ENCODE measurements at regions of chr19 and their contacts with region 1.

Region 1: GRCh38 chr19:3365836-3366752 is at the start of gene NFIC:
- DNase-seq: peak in 1 of 2 donors; percentile 90
- H3K4me3 ChIP-seq: peak within 1 kb of the TSS; percentile 99
- H3K27ac ChIP-seq: peak within 1 kb of the TSS; percentile 100
- H3K4me1 ChIP-seq: peaks cover 18 to 37% of the 10 kb centered on the region in 2 donors
- H3K27me3 ChIP-seq: no peaks in the 10 kb centered on the region
- CTCF ChIP-seq: no peak
- total RNA-seq, gene NFIC: 194 TPM

Region 2: DNA sequence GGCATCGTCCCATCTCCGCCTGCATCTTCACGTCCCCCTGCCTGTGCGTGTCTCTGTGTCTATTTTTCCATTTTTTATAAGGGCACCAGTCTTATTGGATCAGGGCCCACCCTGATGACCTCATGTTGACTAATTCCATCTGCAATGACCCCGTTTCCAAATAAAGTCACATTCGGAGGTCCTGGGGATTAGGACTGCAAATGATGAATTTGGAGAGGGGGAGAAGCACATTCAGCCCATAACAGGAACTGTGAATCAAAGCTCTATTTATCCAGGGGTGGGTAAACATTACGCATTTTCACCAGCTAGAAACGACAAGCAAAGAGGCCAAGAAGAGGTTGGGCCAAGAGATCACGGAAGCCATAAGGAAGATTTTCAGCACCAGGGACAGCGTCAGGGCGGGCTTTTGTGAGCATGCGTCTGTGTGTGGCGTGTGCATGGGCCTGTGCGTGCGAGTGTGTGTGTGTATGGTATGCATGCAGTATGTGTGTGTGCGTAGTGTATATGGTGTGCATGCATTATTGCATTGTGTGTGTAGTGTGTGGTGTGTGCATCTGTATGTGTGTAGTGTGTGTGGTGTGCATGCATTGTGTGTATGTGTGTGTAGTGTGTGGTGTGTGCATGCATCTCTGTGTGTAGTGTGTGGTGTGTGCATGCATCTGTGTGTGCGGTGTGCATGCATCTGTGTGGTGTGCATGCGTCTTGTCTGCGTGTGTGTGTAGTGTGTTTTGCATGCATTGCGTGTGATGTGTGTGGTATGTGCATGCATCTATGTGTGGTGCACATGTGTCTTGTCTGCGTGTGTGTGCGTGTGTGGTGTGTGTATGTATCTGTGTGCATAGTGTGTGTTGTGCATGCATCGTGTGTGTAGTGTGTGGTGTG is 122.0 kb before region 1 on chr19:
- intact Hi-C with region 1: no loop called
- DNase-seq: no peak
- H3K4me3 ChIP-seq: no peak overlapping the region
- H3K27ac ChIP-seq: no peak overlapping the region
- H3K4me1 ChIP-seq: no peaks in the 10 kb centered on the region
- H3K27me3 ChIP-seq: no peaks in the 10 kb centered on the region
- CTCF ChIP-seq: no peak

Region 3: GRCh38 chr19:3292958-3293529 is 73.0 kb before region 1 on chr19:
- intact Hi-C with region 1: no loop called
- DNase-seq: no peak
- H3K4me3 ChIP-seq: no peak overlapping the region
- H3K27ac ChIP-seq: no peak overlapping the region
- H3K4me1 ChIP-seq: no peaks in the 10 kb centered on the region
- H3K27me3 ChIP-seq: no peaks in the 10 kb centered on the region
- CTCF ChIP-seq: no peak

Region 4: DNA sequence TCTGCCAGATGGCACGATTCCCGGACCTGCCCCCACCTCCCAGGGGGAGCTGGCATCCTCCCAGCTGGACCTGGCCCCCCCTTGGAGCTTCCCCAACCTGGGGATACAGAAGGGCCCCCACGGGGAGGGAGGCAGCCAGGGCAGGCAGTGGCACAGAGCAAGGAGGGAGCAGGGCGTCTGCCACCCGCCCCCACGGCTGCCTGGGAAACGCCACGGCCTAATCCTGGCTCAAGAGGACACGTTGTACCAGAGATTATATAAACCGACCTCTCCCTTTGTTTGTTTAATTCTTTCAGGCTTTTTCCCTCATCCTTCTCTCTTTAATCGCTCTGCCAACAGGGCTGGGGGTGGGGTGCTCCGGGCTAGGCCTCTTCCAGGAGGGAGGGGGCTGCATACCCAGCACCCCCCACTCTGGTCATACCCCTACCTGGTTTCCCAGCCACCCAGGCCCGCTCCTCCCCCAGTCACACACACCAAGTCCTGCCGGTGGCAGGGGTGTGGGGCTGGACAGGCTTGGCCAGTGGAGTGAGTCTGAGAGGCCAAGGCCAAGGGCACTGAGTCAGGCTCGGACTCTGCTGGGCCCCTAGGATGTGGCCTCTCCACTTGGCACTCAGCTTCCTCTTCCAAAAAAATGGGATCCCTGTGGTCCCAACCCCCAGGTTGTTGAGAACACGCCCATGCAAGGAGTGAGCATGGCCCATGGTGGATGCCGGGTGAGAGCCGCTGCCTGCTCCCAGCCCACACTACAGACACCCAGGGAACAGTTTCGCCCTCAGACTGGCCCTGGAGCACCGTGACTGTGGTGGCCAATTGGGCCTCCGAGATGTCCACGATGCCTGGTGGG is 29.2 kb before region 1 on chr19:
- intact Hi-C with region 1: no loop called
- DNase-seq: peak; percentile 76 to 97
- H3K4me3 ChIP-seq: no peak overlapping the region
- H3K27ac ChIP-seq: peak overlapping the region; percentile 93 to 98
- H3K4me1 ChIP-seq: peaks cover 22 to 50% of the 10 kb centered on the region in 2 donors
- H3K27me3 ChIP-seq: no peaks in the 10 kb centered on the region
- CTCF ChIP-seq: peak in 1 of 3 experiments; percentile 0

Region 5: DNA sequence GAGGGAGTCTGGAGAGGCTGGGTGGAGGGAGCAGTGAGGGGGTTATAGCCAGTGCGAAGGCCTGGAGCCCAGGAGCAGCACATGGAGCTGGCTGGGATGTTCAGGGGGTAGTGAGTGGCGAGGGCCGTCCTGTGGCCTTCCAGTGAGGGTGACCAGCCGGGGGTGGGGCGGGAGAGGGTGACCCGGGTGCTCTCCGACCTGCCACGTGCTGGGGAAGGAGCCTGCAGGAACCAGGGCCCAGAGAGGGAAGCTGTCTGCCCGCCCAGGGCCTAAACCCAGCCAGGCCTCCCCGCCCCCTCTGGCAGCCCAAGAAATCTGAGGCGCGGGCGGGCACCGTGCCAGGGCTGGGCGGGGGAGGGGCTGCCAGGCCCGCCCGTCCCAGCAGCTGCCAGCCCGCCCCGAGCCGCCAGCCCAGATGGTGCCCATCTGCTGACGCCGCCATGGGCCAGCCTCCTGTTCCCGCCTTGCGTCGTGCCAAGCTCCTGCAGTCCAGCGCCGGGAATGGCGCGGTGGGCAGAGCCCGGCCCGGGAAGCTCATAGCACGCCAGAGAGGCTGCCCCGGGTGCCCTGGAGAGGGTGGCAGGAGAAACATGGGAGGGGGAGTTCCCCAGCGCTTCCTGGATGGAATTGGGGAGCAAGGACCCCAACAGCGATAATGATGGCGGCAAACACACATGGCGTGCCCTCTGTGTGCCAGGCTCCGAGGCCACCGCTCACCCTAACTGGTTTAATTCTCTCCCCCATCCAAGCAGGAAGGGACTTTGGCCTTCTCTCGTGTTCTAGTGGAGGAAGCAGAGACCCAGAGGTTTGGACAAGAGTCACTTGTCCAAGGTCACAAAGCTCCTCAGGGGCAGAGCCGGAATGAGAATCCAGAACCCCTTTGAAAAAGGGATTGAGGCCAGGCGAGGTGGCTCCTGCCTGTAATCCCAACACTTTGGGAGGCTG is 21.8 kb after region 1 on chr19:
- intact Hi-C with region 1: loop called (anchors 1 kb)
- DNase-seq: peak; percentile 71 to 92
- H3K4me3 ChIP-seq: peak overlapping the region in 1 of 2 donors; percentile 27
- H3K27ac ChIP-seq: peak overlapping the region; percentile 75 to 84
- H3K4me1 ChIP-seq: peaks cover 38 to 69% of the 10 kb centered on the region in 2 donors
- H3K27me3 ChIP-seq: no peaks in the 10 kb centered on the region
- CTCF ChIP-seq: peak in 2 of 3 experiments; percentile 12 to 42